ENCODE measurements at regions of chr3 and their contacts with region 1.

Region 1: GRCh38 chr3:169772897-169773828 is at the start of gene MYNN:
- DNase-seq: peak; percentile 95
- ATAC-seq: peak; percentile 80
- H3K4me3 Mint-ChIP-seq: peak within 1 kb of the TSS; percentile 99
- H3K27ac Mint-ChIP-seq: peak within 1 kb of the TSS; percentile 100
- H3K4me1 Mint-ChIP-seq: peaks cover 45% of the 10 kb centered on the region
- H3K27me3 Mint-ChIP-seq: no peaks in the 10 kb centered on the region
- total RNA-seq, gene MYNN: 13.6 to 14.2 TPM

Region 2: GRCh38 chr3:168752339-168752738 is 1020.8 kb before region 1 on chr3:
- CTCF ChIA-PET with region 1: no interaction called
- POLR2A ChIA-PET with region 1: no interaction called
- intact Hi-C with region 1: no loop called
- DNase-seq: no peak
- ATAC-seq: no peak
- H3K4me3 Mint-ChIP-seq: no peak overlapping the region
- H3K27ac Mint-ChIP-seq: no peak overlapping the region
- H3K4me1 Mint-ChIP-seq: no peaks in the 10 kb centered on the region
- H3K27me3 Mint-ChIP-seq: no peaks in the 10 kb centered on the region

Region 3: GRCh38 chr3:169759256-169759655 is 13.9 kb before region 1 on chr3:
- CTCF ChIA-PET with region 1: interaction called, 15 read pairs
- POLR2A ChIA-PET with region 1: interaction called, 4 read pairs
- intact Hi-C with region 1: loop called in 1 of 2 experiments (anchors 2 kb)
- DNase-seq: no peak
- ATAC-seq: peak; percentile 85
- H3K4me3 Mint-ChIP-seq: peak overlapping the region; percentile 24
- H3K27ac Mint-ChIP-seq: peak overlapping the region; percentile 71
- H3K4me1 Mint-ChIP-seq: peaks cover 28% of the 10 kb centered on the region
- H3K27me3 Mint-ChIP-seq: no peaks in the 10 kb centered on the region